ENCODE measurements at regions of chr3 and their contacts with region 1.

Region 1: GRCh38 chr3:104031598-104031997 is 1335.1 kb upstream of the ALCAM start:
- DNase-seq: no peak
- H3K4me3 ChIP-seq: no peak overlapping the region
- H3K27ac ChIP-seq: no peak overlapping the region
- H3K4me1 ChIP-seq: no peaks in the 10 kb centered on the region
- H3K27me3 ChIP-seq: no peaks in the 10 kb centered on the region
- CTCF ChIP-seq: no peak
- EP300 ChIP-seq: no peak
- POLR2A ChIP-seq: no peak

Region 2: GRCh38 chr3:103712320-103713008 is 319.1 kb before region 1 on chr3:
- intact Hi-C with region 1: no loop called
- DNase-seq: no peak
- H3K4me3 ChIP-seq: no peak overlapping the region
- H3K27ac ChIP-seq: no peak overlapping the region
- H3K4me1 ChIP-seq: no peaks in the 10 kb centered on the region
- H3K27me3 ChIP-seq: no peaks in the 10 kb centered on the region
- CTCF ChIP-seq: no peak
- EP300 ChIP-seq: no peak
- POLR2A ChIP-seq: no peak

Region 3: DNA sequence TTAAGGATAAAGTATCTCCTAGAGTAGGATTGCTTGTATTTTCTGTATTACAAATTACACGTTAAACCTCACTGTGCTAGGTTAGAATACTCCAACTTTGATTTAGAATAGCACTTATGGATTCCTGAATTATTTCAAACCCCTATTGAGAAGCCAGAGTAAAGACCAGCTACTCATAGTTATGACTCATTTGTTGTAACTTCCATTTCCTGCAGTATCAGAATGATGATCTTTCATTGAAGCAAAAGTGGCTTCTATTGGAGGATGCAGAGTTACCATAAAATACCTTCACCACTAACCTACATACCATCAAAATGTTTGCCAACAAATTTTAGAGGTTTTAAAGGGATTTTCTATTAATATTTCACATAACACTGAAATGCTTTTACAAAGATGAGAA is 12.4 kb after region 1 on chr3:
- intact Hi-C with region 1: loop called in 1 of 4 experiments (anchors 1 kb)
- DNase-seq: no peak
- H3K4me3 ChIP-seq: no peak overlapping the region
- H3K27ac ChIP-seq: no peak overlapping the region
- H3K4me1 ChIP-seq: no peaks in the 10 kb centered on the region
- H3K27me3 ChIP-seq: no peaks in the 10 kb centered on the region
- CTCF ChIP-seq: no peak
- EP300 ChIP-seq: no peak
- POLR2A ChIP-seq: no peak

Region 4: DNA sequence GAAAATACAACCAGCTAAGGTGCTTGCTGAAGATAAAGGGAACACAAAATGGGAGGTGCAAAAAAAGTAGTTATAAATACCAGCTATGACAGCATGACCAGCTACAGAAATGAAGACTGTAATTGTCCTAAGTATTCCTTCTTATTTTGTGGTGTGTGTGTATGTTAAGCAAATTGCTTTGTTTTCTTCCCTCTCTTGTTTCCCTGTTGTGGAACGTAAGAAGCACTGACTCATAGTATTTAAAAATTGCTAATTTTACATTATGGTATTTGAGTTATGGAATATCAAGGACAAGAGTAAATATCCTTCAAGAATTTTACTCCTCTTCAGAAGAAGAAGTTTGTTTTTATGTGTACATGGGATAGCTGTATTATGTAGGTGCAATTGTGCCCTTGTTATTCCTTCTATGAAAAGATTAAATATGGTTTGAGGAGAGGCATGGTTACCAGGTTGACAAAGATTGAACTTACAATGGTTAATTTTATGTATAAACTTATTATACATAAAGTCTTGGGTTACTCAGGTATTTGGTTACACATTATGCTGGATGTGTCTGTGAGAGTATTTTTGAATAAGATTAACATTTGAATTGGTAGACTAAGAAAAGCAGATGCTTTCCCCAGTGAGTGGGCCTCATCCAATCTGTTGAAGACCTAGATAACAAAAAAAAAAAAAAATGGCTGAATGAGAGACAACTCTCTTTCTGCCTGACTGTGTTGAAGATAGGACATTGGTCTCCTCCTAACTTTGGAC is 203.0 kb after region 1 on chr3:
- intact Hi-C with region 1: no loop called
- DNase-seq: no peak
- H3K4me3 ChIP-seq: no peak overlapping the region
- H3K27ac ChIP-seq: no peak overlapping the region
- H3K4me1 ChIP-seq: no peaks in the 10 kb centered on the region
- H3K27me3 ChIP-seq: no peaks in the 10 kb centered on the region
- CTCF ChIP-seq: no peak
- EP300 ChIP-seq: no peak
- POLR2A ChIP-seq: no peak

Region 5: GRCh38 chr3:104269771-104270170 is 238.2 kb after region 1 on chr3:
- intact Hi-C with region 1: no loop called
- DNase-seq: no peak
- H3K4me3 ChIP-seq: no peak overlapping the region
- H3K27ac ChIP-seq: no peak overlapping the region
- H3K4me1 ChIP-seq: no peaks in the 10 kb centered on the region
- H3K27me3 ChIP-seq: no peaks in the 10 kb centered on the region
- CTCF ChIP-seq: no peak
- EP300 ChIP-seq: no peak
- POLR2A ChIP-seq: no peak

Measured in ovary (tissue), 10 donors.